ENCODE measurements at regions of chr13 and their contacts with region 1.

Region 1: DNA sequence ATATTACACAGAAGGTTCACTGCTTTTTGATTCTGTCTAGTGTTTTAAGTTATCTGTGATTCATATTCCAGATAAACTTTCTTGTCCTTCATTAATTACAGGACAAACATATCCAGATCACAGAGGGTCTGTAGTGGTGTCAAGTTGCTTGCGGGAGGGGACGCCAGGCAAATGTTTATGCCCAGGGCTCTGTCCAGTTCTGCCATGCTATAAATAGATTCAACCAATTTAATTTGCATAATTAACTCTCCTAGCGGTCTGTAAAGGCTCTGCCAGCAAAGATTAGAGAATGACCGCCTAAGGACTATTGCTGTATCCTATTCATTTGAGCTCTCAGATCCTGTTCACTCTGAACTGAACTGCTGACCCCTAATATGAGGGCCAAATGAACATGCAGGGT is 59.7 kb upstream of the TRPC4 start:
- DNase-seq: no peak
- H3K4me3 ChIP-seq: no peak overlapping the region
- H3K27ac ChIP-seq: no peak overlapping the region
- H3K4me1 ChIP-seq: peaks cover 0 to 25% (median 6%) of the 10 kb centered on the region in 4 donors
- H3K27me3 ChIP-seq: no peaks in the 10 kb centered on the region
- CTCF ChIP-seq: no peak
- EP300 ChIP-seq: no peak
- POLR2A ChIP-seq: no peak

Region 2: GRCh38 chr13:37788346-37788745 is 141.0 kb before region 1 on chr13:
- intact Hi-C with region 1: loop called (anchors 10 kb)
- DNase-seq: no peak
- H3K4me3 ChIP-seq: no peak overlapping the region
- H3K27ac ChIP-seq: peak overlapping the region in 1 of 4 donors; percentile 1
- H3K4me1 ChIP-seq: peaks cover 0 to 24% (median 15%) of the 10 kb centered on the region in 4 donors
- H3K27me3 ChIP-seq: no peaks in the 10 kb centered on the region
- CTCF ChIP-seq: no peak
- EP300 ChIP-seq: no peak
- POLR2A ChIP-seq: no peak

Region 3: DNA sequence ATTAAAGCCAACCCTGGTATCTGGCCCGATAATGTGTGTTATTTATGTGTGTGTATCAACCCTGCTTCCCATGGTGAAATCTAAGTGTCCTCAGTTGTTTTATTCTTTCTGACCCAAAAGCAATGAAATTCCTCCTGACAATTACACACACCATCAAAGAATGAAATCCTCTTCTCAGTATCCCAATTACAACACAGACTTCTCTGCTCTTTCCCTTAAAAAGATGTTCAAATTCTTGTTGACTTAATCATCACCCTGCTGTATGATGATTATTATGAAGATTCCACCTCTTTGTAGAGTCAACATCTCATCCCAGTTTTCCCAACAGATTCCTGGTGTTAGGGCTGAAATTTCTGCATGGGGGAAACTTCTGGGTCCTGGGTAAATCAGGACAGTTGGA is 50.8 kb before region 1 on chr13:
- intact Hi-C with region 1: no loop called
- DNase-seq: no peak
- H3K4me3 ChIP-seq: no peak overlapping the region
- H3K27ac ChIP-seq: no peak overlapping the region
- H3K4me1 ChIP-seq: no peaks in the 10 kb centered on the region
- H3K27me3 ChIP-seq: no peaks in the 10 kb centered on the region
- CTCF ChIP-seq: no peak
- EP300 ChIP-seq: no peak
- POLR2A ChIP-seq: no peak

Measured in sigmoid colon (tissue), 7 donors.